Endothelial cell of umbilical vein (primary cell): ENCODE measurements at regions of chr10 and their contacts with region 1.

Region 1: DNA sequence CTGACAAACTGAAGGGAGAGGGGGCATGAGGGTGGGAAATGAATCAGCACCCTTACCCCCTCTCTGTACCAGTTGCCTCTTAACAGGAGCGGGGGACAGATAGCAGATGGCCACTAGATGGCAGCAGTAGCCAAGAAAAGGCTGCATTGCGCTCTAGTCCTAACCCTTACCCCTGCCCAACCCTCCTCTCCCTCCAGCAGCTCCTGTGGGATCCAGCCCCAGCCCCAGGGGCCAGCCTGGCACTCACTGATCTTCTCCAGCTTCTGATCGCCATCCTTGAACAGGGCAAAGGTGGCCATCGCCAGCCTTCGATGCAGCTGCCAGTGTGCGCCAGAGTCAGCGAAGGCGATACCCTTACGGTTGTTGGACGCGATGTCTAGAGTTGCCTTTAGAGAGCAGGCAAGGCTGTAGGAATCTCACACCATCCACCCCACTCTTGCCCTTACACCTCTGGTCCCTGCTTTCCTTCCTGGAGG is 2.2 kb downstream of the CYP17A1 start:
- DNase-seq: peak; percentile 80
- H3K4me3 ChIP-seq: no peak overlapping the region
- H3K27ac ChIP-seq: no peak overlapping the region
- H3K4me1 ChIP-seq: no peaks in the 10 kb centered on the region
- H3K27me3 ChIP-seq: peaks cover 0 to 4% of the 10 kb centered on the region in 2 experiments
- CTCF ChIP-seq: peak; percentile 82 to 85
- POLR2A ChIP-seq: no peak

Region 2: DNA sequence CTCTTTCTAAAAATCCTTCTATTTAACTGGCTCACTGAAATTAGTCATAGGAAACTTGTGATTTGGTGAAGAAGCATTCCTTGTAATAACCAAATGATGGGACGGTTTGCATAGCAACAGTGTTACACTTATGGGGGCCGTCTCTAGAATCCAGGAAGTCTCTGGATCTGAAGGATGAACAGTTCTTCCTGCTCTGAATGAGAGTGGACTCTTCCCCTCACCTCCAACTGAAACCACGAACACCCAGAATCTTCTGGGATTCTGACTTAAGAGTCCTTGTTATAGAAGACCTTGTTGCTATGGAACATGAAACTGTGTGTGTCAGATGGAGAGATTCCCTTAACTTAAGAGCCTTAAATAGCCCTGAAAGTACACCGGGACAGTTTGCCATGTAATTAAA is 659.6 kb before region 1 on chr10:
- CTCF ChIA-PET with region 1: no interaction called
- POLR2A ChIA-PET with region 1: no interaction called
- dilution Hi-C with region 1: no loop called
- intact Hi-C with region 1: no loop called
- DNase-seq: no peak
- H3K4me3 ChIP-seq: no peak overlapping the region
- H3K27ac ChIP-seq: no peak overlapping the region
- H3K4me1 ChIP-seq: no peaks in the 10 kb centered on the region
- H3K27me3 ChIP-seq: peaks cover 3 to 9% of the 10 kb centered on the region in 2 experiments
- CTCF ChIP-seq: no peak
- POLR2A ChIP-seq: no peak

Region 3: GRCh38 chr10:102729029-102730026 is 105.7 kb before region 1 on chr10:
- CTCF ChIA-PET with region 1: interaction called, 3 read pairs
- POLR2A ChIA-PET with region 1: no interaction called
- dilution Hi-C with region 1: no loop called
- intact Hi-C with region 1: loop called (anchors 1 kb)
- DNase-seq: peak; percentile 78
- H3K4me3 ChIP-seq: no peak overlapping the region
- H3K27ac ChIP-seq: no peak overlapping the region
- H3K4me1 ChIP-seq: no peaks in the 10 kb centered on the region
- H3K27me3 ChIP-seq: no peaks in the 10 kb centered on the region
- CTCF ChIP-seq: peak; percentile 90 to 92
- POLR2A ChIP-seq: no peak

Region 4: DNA sequence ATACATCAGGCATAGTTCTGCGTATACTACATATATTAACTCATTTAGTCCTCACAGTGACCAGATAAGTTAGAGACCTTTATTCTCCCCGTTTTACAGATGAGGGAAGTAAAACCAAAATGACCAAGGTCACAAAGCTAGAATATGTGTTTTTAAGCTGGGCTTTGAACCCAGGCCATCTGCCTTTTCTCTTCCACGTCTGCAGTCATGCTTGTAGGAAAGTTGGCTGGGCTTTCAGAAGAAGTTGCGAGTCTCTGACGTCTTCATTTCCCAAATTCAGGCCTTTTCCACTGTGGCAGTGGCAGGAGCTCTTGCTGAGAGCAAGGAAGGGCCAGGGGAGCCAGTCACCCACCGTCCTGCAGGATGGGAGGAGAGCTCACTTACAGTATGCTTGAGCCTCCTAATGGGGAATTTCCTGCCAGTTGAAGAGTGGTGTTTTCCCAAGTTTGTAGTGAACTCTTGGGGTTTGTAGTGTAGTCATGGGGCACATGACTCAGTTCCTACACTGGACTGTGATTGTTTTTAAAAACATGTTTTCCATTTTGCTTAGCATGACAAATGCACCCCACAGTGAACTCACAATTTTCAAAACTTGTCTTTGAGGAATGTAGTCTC is 32.0 kb before region 1 on chr10:
- CTCF ChIA-PET with region 1: no interaction called
- POLR2A ChIA-PET with region 1: no interaction called
- dilution Hi-C with region 1: no loop called
- intact Hi-C with region 1: no loop called
- DNase-seq: peak; percentile 99
- H3K4me3 ChIP-seq: no peak overlapping the region
- H3K27ac ChIP-seq: peak overlapping the region; percentile 95
- H3K4me1 ChIP-seq: peaks cover 46% of the 10 kb centered on the region
- H3K27me3 ChIP-seq: no peaks in the 10 kb centered on the region
- CTCF ChIP-seq: no peak
- POLR2A ChIP-seq: peak; percentile 52

Region 5: GRCh38 chr10:102845352-102845902 is 10.4 kb after region 1 on chr10:
- CTCF ChIA-PET with region 1: interaction called, 14 read pairs
- POLR2A ChIA-PET with region 1: no interaction called
- dilution Hi-C with region 1: no loop called
- intact Hi-C with region 1: no loop called
- DNase-seq: no peak
- H3K4me3 ChIP-seq: no peak overlapping the region
- H3K27ac ChIP-seq: no peak overlapping the region
- H3K4me1 ChIP-seq: no peaks in the 10 kb centered on the region
- H3K27me3 ChIP-seq: peaks cover 0 to 6% of the 10 kb centered on the region in 2 experiments
- CTCF ChIP-seq: no peak
- POLR2A ChIP-seq: no peak

Region 6: DNA sequence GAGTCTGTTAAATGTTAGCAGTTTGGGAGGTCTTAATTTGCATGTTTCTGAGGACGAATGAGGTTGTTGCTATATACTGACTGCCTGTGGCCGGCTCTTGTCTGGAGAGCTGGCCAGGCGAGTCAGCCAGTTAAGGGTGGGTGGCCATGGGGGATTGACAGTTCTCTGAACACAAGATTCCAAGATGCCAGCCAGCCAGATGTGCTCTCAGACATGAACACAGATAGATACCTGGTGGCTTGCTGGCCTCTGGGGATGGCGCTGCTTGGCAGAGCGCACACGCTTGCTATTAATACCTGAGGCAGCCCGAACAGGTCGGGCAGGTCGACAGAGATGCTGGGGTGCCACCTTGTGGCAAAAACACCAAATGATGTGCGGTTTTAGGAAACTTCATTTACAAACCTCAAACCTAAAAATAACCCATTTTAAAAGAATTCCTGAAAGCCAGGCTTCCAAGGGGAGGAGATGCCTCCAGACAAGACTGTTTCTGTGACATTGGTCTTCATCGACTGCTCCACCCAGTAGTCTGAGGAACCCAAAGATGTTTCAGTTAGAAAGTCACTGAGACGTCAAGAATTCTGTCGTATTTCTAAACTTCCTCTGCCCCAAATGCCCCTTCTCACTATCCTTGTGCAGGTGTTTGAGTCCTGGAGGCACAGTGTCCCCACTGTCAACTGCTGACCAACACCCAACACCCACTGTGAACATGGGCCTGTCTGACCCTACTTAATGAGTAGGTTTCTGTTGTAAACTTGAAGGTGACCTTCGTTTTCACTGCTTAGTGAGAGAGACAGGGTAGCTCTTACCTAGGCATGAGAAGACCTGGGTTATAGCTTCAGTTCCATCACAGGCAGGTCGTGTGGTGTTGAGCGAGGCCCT is 234.6 kb after region 1 on chr10:
- CTCF ChIA-PET with region 1: interaction called, 8 read pairs
- POLR2A ChIA-PET with region 1: no interaction called
- dilution Hi-C with region 1: no loop called
- intact Hi-C with region 1: loop called (anchors 1 kb)
- DNase-seq: peak; percentile 56
- H3K4me3 ChIP-seq: no peak overlapping the region
- H3K27ac ChIP-seq: no peak overlapping the region
- H3K4me1 ChIP-seq: peaks cover 2% of the 10 kb centered on the region
- H3K27me3 ChIP-seq: no peaks in the 10 kb centered on the region
- CTCF ChIP-seq: peak; percentile 49 to 55
- POLR2A ChIP-seq: no peak